Calu3 (cell line): ENCODE measurements at regions of chr12 and their contacts with region 1.

Region 1: GRCh38 chr12:4276524-4277204 is 3.1 kb downstream of the CCND2 start:
- DNase-seq: peak; percentile 82
- H3K4me3 Mint-ChIP-seq: peak overlapping the region; percentile 36
- H3K27ac Mint-ChIP-seq: no peak overlapping the region
- H3K4me1 Mint-ChIP-seq: peaks cover 25% of the 10 kb centered on the region
- H3K27me3 Mint-ChIP-seq: peaks cover 98% of the 10 kb centered on the region
- CTCF ChIP-seq: peak; percentile 75

Region 2: DNA sequence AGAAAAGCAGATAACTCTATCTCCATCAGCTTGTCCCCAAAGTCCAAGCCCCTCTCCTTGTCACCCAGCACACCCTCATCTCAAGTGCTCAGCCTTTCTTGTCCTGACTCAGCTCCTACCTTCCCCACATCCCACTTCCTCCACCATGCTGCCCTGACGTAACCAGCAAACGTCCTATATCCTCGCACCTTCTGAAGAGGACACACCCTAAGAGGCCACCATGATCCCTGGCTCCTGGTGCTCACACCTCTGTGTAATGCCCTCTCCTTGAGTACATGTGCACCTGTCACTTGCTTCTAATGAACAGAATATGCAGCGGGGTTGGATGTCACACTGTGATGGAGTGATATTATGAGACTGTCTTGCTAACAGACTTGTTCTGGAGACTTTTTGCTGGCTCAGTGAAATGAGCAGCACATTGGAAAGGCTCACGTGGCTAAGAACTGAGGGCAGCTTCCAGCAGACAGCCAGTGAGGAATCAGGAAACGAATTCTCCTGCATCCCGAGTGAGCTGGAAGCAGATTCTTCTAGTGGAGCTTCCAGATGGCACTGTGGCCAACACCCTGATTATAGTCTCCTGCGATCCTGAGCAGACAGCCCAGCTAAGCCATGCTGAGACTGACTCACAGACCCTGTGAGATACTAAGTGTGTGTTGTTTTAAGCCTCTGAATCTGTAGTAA is 1215.7 kb before region 1 on chr12:
- CTCF ChIA-PET with region 1: no interaction called
- intact Hi-C with region 1: no loop called
- DNase-seq: no peak
- H3K4me3 Mint-ChIP-seq: no peak overlapping the region
- H3K27ac Mint-ChIP-seq: no peak overlapping the region
- H3K4me1 Mint-ChIP-seq: no peaks in the 10 kb centered on the region
- H3K27me3 Mint-ChIP-seq: peaks cover 58% of the 10 kb centered on the region
- CTCF ChIP-seq: no peak

Region 3: DNA sequence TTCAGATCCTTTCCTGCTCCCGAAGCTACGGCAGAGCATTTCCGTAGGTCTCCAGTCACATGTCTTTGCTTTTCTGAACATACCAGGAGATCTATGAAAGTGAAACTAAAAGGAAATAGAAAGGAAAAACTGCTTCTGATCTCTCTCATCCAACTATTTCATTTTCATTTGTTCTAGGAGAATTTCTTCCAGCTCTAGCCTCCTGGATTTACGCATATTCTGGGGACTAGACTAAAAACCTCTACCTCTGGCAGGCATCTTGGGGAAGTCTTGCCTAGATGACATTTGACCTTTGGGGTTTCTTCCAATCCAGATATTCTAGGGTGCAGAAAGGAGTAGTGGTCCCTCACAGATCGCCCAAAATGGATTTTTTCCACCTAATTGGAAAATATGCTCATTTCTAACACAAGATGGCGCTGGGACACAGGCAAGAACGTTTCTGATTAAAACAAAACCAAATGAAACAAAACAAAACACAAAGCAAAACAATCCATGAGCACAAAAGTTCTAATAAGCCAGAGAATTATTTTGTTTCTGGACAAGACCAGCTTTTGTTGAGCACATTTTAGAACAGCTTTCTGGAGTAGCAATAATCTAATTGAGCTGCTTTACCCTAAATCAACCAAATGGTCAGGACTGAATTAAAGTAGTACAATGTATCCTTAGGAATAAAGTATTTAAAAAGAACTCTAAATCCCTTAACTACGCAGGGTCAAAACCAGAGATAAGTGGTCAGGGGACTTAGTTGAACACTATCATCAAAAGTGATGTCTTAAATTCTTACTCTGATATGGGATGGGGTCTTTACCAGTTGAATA is 391.2 kb before region 1 on chr12:
- CTCF ChIA-PET with region 1: interaction called, 40 read pairs
- intact Hi-C with region 1: loop called (anchors 1 kb)
- DNase-seq: peak; percentile 5
- H3K4me3 Mint-ChIP-seq: no peak overlapping the region
- H3K27ac Mint-ChIP-seq: no peak overlapping the region
- H3K4me1 Mint-ChIP-seq: no peaks in the 10 kb centered on the region
- H3K27me3 Mint-ChIP-seq: peaks cover 23% of the 10 kb centered on the region
- CTCF ChIP-seq: peak; percentile 64

Region 4: DNA sequence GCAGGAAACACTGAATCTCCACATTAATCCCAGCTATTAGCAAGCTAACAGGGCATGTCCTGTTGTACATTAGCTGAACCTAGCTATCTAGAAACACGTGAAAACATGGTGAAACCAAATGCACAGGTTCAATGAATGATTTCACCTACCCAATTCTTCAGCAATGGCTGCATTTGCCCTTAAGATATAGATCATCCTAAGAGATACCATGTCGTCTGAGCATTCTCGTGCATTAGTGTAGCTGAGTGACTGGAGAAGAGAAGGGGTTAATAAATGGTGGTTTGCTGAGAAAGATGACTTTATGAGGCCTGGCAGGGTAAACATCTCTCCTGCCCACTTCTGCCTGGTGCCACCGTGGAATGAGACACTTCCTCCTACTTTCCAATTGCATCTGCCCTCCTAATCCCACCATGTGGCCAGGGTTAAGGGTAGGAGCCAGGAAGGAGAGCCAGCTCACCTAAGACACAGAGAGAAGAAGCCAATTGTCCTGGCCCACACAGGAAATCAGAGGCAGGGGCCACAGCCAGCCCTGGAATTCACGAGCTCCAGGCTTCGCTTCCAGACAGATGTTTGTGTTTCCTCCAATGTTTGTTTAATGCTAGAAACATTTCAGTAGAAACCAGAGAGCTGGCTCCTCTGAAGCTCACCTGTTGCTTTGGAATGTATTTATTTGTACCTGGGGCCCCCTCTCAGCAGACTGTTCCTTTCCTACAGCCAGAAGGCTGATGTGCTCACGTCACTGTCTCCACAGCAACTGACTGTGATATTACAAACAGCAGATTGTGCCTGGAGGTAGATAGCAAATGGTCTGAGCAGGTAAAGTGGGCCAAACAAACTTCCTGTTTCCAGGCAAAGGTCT is 277.5 kb before region 1 on chr12:
- CTCF ChIA-PET with region 1: interaction called, 20 read pairs
- intact Hi-C with region 1: loop called (anchors 2 kb)
- DNase-seq: peak; percentile 63
- H3K4me3 Mint-ChIP-seq: no peak overlapping the region
- H3K27ac Mint-ChIP-seq: peak overlapping the region; percentile 70
- H3K4me1 Mint-ChIP-seq: peaks cover 17% of the 10 kb centered on the region
- H3K27me3 Mint-ChIP-seq: peaks cover 11% of the 10 kb centered on the region
- CTCF ChIP-seq: no peak

Region 5: GRCh38 chr12:4037747-4038312 is 238.8 kb before region 1 on chr12:
- CTCF ChIA-PET with region 1: interaction called, 13 read pairs
- intact Hi-C with region 1: loop called (anchors 5 kb)
- DNase-seq: peak; percentile 57
- H3K4me3 Mint-ChIP-seq: no peak overlapping the region
- H3K27ac Mint-ChIP-seq: no peak overlapping the region
- H3K4me1 Mint-ChIP-seq: no peaks in the 10 kb centered on the region
- H3K27me3 Mint-ChIP-seq: peaks cover 98% of the 10 kb centered on the region
- CTCF ChIP-seq: peak; percentile 68

Region 6: GRCh38 chr12:4107436-4107878 is 169.2 kb before region 1 on chr12:
- CTCF ChIA-PET with region 1: interaction called, 20 read pairs
- intact Hi-C with region 1: loop called (anchors 1 kb)
- DNase-seq: peak; percentile 41
- H3K4me3 Mint-ChIP-seq: no peak overlapping the region
- H3K27ac Mint-ChIP-seq: no peak overlapping the region
- H3K4me1 Mint-ChIP-seq: no peaks in the 10 kb centered on the region
- H3K27me3 Mint-ChIP-seq: peaks cover 75% of the 10 kb centered on the region
- CTCF ChIP-seq: peak; percentile 45

Region 7: DNA sequence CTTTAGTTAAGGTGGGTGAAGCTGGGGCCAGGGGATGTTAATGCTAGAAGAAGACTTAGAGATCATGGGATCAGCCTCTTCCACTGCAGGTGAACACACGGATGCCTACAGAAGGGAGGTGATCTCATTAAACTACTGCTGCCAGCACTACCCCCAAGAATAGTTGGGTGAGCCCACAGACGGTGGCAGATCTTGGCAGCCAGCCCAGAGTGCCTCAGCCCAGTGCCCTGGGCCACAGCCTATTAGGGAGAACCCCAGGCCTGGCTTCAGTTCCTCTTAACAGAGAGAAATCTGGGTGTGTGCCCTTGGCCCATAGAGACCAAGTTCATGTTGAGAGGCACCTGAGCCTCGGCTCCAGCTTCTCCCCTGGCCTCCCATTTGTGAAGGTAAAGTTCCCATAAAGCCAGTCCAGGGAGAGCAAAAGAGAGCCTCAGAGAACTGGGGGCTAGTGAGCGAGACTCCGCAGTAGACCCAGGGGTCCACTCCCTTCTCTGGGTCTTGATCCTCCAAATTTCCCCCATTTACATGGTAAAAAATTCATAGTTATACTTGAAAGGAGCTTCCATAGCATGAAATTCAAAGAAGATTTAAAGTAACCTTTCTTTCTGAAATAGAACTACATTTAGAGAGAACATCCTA is 128.1 kb before region 1 on chr12:
- CTCF ChIA-PET with region 1: interaction called, 4 read pairs
- intact Hi-C with region 1: loop called (anchors 10 kb)
- DNase-seq: no peak
- H3K4me3 Mint-ChIP-seq: no peak overlapping the region
- H3K27ac Mint-ChIP-seq: no peak overlapping the region
- H3K4me1 Mint-ChIP-seq: peaks cover 5% of the 10 kb centered on the region
- H3K27me3 Mint-ChIP-seq: peaks cover 69% of the 10 kb centered on the region
- CTCF ChIP-seq: no peak

Region 8: GRCh38 chr12:4346931-4347330 is 70.3 kb after region 1 on chr12:
- CTCF ChIA-PET with region 1: no interaction called
- intact Hi-C with region 1: no loop called
- DNase-seq: no peak
- H3K4me3 Mint-ChIP-seq: no peak overlapping the region
- H3K27ac Mint-ChIP-seq: no peak overlapping the region
- H3K4me1 Mint-ChIP-seq: no peaks in the 10 kb centered on the region
- H3K27me3 Mint-ChIP-seq: no peaks in the 10 kb centered on the region
- CTCF ChIP-seq: no peak

Region 9: DNA sequence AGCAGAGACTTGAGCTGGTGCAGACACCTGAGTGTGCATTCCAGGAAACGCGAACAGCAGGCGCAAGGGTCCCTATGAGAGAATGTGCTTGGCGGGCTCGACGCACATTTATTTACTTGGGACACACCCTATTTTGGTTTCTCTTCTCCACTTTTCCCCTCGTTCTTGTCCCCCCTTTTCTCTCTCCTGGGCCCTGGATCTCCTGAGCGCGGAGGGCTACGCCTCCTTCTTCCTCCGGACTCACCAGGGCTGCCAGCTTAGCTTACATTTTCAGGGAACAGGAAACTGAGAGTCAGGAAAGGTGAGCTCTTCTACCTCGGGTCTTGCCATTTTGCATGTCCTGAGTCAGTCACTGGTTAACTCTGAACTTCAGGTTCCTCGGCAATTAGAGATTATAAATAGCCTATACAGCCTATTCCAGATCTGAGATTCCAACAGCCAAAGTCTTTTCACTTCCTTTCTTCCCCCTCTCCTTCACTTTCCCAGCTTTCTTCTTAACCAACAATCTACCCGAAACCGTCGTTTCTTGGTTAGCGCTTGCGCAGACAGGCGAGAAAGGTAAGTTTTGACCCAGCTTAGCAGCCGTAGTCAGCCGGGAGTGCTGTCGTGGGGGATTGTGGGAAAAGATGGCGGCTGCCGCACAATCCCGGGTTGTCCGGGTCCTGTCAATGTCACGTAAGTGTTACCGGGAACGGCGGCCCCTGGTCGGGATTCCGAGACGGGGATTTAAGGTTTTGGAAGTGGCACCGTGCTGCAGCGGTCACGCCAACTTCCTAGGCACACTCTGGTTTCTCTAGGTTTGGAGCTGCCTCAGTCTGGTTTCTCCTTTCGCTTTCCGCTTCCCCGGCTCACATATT is 372.1 kb after region 1 on chr12 and contains the starts of genes AKAP3 and NDUFA9:
- CTCF ChIA-PET with region 1: no interaction called
- intact Hi-C with region 1: no loop called
- DNase-seq: peak; percentile 80
- H3K4me3 Mint-ChIP-seq: peak within 1 kb of the TSS; percentile 99
- H3K27ac Mint-ChIP-seq: peak within 1 kb of the TSS; percentile 99
- H3K4me1 Mint-ChIP-seq: peaks cover 22% of the 10 kb centered on the region
- H3K27me3 Mint-ChIP-seq: peaks cover 11% of the 10 kb centered on the region
- CTCF ChIP-seq: no peak
- total RNA-seq, gene AKAP3: 1.5 and 1.6 TPM in 2 replicates
- total RNA-seq, gene NDUFA9: 125 and 130 TPM in 2 replicates